A673 (cell line): ENCODE measurements at regions of chr5 and their contacts with region 1.

Region 1: GRCh38 chr5:60687927-60688720 is 11.8 kb downstream of the DEPDC1B start:
- DNase-seq: peak; percentile 32
- H3K4me3 ChIP-seq: no peak overlapping the region
- H3K27ac ChIP-seq: no peak overlapping the region
- H3K4me1 ChIP-seq: peaks cover 5% of the 10 kb centered on the region
- H3K27me3 ChIP-seq: no peaks in the 10 kb centered on the region
- CTCF ChIP-seq: peak; percentile 35; the same call in 1 of the 2 replicates

Region 2: GRCh38 chr5:60944904-60945812 is 257.0 kb after region 1 on chr5 and contains the starts of genes ERCC8 and NDUFAF2:
- CTCF ChIA-PET with region 1: no interaction called
- POLR2A ChIA-PET with region 1: no interaction called
- intact Hi-C with region 1: loop called (anchors 10 kb)
- DNase-seq: peak; percentile 95
- H3K4me3 ChIP-seq: peak within 1 kb of the TSS; percentile 89
- H3K27ac ChIP-seq: peak within 1 kb of the TSS; percentile 79
- H3K4me1 ChIP-seq: peaks cover 14% of the 10 kb centered on the region
- H3K27me3 ChIP-seq: no peaks in the 10 kb centered on the region
- CTCF ChIP-seq: no peak
- total RNA-seq, gene ERCC8: 25.6 and 26.2 TPM in 2 replicates
- total RNA-seq, gene NDUFAF2: 61.3 and 61.6 TPM in 2 replicates